H1 (cell line): ENCODE measurements at regions of chr1 and their contacts with region 1.

Region 1: GRCh38 chr1:88079036-88079435 is 605.0 kb upstream of the PKN2 start:
- DNase-seq: no peak
- H3K4me3 ChIP-seq: no peak overlapping the region
- H3K27ac ChIP-seq: no peak overlapping the region
- H3K4me1 ChIP-seq: no peaks in the 10 kb centered on the region
- H3K27me3 ChIP-seq: no peaks in the 10 kb centered on the region
- CTCF ChIP-seq: peak; percentile 59 to 79 (median 65)
- EP300 ChIP-seq: no peak
- POLR2A ChIP-seq: no peak
- RAD21 ChIP-seq: peak; percentile 66 to 71

Region 2: GRCh38 chr1:88068407-88068960 is 10.6 kb before region 1 on chr1:
- CTCF ChIA-PET with region 1: interaction called, 12 read pairs
- POLR2A ChIA-PET with region 1: no interaction called
- DNase-seq: no peak
- H3K4me3 ChIP-seq: no peak overlapping the region
- H3K27ac ChIP-seq: no peak overlapping the region
- H3K4me1 ChIP-seq: no peaks in the 10 kb centered on the region
- H3K27me3 ChIP-seq: no peaks in the 10 kb centered on the region
- CTCF ChIP-seq: no peak
- EP300 ChIP-seq: no peak
- POLR2A ChIP-seq: no peak
- RAD21 ChIP-seq: no peak